Panc1 (cell line): ENCODE measurements at regions of chr5 and their contacts with region 1.

Region 1: DNA sequence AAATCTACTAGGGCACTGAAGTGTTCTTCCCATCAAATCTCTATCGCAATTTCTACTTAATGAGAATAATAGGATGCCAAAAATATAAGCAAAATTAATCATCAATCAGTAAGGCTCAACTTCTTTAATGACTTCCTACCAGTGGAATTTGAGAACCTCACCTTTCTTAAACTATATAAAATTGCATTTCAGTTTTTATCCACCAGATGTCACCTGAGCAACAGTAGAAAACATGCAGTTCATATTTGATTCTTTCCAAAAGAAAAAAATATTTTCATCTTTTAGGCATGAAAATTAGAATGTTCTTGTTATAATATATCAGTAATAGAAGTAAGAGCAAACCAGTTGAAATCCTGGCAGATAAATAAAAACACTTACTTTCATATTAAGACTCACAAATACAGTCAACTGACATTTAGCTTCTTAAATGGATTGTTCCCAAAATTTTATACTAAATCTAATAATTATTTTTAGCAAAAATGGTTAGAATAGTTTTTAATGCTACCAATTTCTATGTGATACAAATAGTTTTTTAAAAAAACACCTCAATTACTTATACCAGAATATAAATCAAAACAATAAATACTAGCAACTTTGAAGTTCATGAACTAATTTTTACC is 13.4 kb upstream of the CCDC112 start:
- DNase-seq: peak; percentile 38
- ATAC-seq: no peak
- H3K4me3 ChIP-seq: no peak overlapping the region
- H3K27ac ChIP-seq: no peak overlapping the region
- H3K4me1 ChIP-seq: no peaks in the 10 kb centered on the region
- H3K27me3 ChIP-seq: peaks cover 2% of the 10 kb centered on the region
- CTCF ChIP-seq: peak; percentile 60; the same call in 1 of the 2 replicates

Region 2: GRCh38 chr5:114957384-114957783 is 352.5 kb before region 1 on chr5:
- CTCF ChIA-PET with region 1: no interaction called
- POLR2A ChIA-PET with region 1: no interaction called
- in situ Hi-C with region 1: no loop called
- intact Hi-C with region 1: no loop called
- DNase-seq: no peak
- ATAC-seq: no peak
- H3K4me3 ChIP-seq: no peak overlapping the region
- H3K27ac ChIP-seq: no peak overlapping the region
- H3K4me1 ChIP-seq: no peaks in the 10 kb centered on the region
- H3K27me3 ChIP-seq: no peaks in the 10 kb centered on the region
- CTCF ChIP-seq: no peak

Region 3: GRCh38 chr5:115289104-115289503 is 20.8 kb before region 1 on chr5:
- CTCF ChIA-PET with region 1: interaction called, 17 read pairs
- POLR2A ChIA-PET with region 1: no interaction called
- in situ Hi-C with region 1: no loop called
- intact Hi-C with region 1: no loop called
- DNase-seq: no peak
- ATAC-seq: no peak
- H3K4me3 ChIP-seq: no peak overlapping the region
- H3K27ac ChIP-seq: no peak overlapping the region
- H3K4me1 ChIP-seq: no peaks in the 10 kb centered on the region
- H3K27me3 ChIP-seq: no peaks in the 10 kb centered on the region
- CTCF ChIP-seq: no peak

Region 4: DNA sequence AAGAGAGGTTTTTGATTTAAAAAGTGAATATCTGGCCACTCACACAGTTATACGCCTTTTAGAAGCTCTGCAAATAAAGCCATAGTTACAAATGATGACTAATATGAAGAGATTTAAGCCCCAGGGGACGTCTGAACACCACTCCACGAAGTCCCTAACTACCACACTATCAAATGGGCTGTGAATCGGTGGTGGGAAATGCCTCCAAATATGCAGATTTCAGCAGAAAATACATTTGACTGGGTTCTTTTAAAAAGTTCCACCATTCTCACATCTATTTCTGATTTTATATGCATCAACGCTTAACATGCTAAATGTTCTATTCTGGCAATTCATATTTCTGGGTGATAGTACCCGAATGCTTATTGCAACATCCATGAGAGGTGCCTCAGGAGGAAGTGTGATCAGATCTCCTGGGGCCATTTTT is 269.9 kb after region 1 on chr5:
- CTCF ChIA-PET with region 1: interaction called, 28 read pairs
- POLR2A ChIA-PET with region 1: interaction called, 3 read pairs
- in situ Hi-C with region 1: no loop called
- intact Hi-C with region 1: loop called (anchors 1 kb)
- DNase-seq: no peak
- ATAC-seq: no peak
- H3K4me3 ChIP-seq: no peak overlapping the region
- H3K27ac ChIP-seq: no peak overlapping the region
- H3K4me1 ChIP-seq: no peaks in the 10 kb centered on the region; the same call in 1 of the 2 replicates
- H3K27me3 ChIP-seq: no peaks in the 10 kb centered on the region
- CTCF ChIP-seq: no peak

Region 5: DNA sequence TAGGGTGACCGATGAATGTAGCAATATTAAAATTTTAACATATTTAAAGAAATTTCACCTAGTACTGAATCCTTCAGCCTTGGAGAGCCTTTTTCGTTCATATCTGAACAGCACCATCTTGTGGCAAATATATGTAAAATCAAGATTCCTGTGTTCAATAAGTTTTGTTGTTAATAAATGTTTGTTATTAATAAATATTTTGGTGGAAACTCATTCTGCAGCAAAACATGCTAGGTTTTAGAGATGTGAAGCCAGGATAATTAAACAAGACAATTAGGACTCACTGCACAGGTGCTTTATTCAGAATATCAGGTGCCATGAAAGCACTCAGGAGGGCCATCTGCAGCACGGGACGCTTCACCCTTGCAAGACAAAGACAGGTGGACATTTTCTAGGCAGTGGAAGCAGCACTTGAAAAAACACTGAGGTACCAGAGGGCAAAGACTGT is 276.8 kb after region 1 on chr5:
- CTCF ChIA-PET with region 1: no interaction called
- POLR2A ChIA-PET with region 1: interaction called, 3 read pairs
- in situ Hi-C with region 1: no loop called
- intact Hi-C with region 1: loop called (anchors 1 kb)
- DNase-seq: no peak
- ATAC-seq: 0 out of 2 replicates have a peak, but pooled peaks have one; percentile 38
- H3K4me3 ChIP-seq: no peak overlapping the region
- H3K27ac ChIP-seq: no peak overlapping the region
- H3K4me1 ChIP-seq: no peaks in the 10 kb centered on the region
- H3K27me3 ChIP-seq: no peaks in the 10 kb centered on the region
- CTCF ChIP-seq: peak; percentile 67